ENCODE measurements at regions of chr3 and their contacts with region 1.

Region 1: GRCh38 chr3:37024092-37024491 is 30.8 kb downstream of the MLH1 start:
- DNase-seq: peak; percentile 8
- H3K4me3 Mint-ChIP-seq: no peak overlapping the region
- H3K27ac Mint-ChIP-seq: no peak overlapping the region
- H3K4me1 Mint-ChIP-seq: no peaks in the 10 kb centered on the region
- H3K27me3 Mint-ChIP-seq: no peaks in the 10 kb centered on the region
- CTCF ChIP-seq: peak; percentile 19

Region 2: DNA sequence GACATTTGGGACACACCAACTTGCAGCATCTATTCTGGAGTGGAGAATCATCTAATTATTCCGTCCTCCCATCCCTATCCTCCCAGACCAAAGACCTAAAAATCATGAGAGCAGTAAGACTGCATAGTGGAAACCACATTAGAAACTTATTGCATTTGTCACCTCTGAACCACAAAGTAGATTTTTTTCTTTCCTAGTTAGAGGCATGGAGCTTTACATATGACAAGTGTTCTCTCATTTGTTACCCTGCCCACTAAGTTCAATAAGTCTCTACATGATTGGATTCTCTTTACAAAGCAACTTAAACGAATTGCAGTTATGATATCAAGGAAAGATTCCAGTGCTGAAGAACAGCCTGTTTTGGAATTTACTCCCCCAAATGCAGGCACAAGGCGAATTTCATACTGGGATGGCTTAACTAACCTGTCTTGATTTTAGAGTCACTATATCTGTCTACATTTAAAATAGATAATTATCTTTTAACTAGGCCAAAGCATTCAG is 192.6 kb after region 1 on chr3:
- CTCF ChIA-PET with region 1: interaction called, 11 read pairs
- POLR2A ChIA-PET with region 1: no interaction called
- intact Hi-C with region 1: loop called (anchors 1 kb)
- DNase-seq: no peak
- H3K4me3 Mint-ChIP-seq: no peak overlapping the region
- H3K27ac Mint-ChIP-seq: no peak overlapping the region
- H3K4me1 Mint-ChIP-seq: peaks cover 10% of the 10 kb centered on the region
- H3K27me3 Mint-ChIP-seq: no peaks in the 10 kb centered on the region
- CTCF ChIP-seq: no peak

Region 3: DNA sequence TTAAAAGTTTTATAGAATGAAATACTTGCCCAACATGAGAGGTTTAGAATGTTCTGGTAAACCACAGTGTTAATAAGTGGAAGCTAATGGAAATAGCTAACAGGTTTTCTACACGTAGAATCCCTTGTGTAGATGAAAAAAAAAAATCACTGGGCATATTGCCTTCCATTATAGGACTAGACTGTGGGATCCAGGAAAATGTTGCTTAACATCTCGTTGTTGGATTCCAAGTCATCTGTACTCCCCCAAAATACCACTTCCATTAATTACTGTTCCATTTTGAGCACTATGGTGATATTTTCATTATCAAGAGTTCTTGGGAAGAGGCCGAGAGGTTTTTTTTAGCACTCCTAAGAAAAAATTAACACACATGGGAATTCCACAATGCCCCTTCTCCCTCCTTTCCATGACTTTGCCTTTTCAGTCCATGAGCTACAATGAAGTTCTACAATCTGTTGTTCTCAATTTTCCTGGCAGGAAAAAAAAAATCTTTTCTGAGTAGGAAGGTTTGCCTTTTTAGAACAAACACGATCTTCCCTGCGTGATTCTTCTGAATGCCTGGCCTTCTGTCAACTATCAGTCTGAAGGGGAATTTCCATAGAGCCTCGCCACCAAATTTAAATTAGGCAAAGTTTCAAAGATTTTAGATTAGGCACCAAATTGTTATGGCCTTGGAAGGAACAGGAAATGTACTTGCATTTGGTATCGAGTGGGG is 763.2 kb after region 1 on chr3:
- CTCF ChIA-PET with region 1: no interaction called
- POLR2A ChIA-PET with region 1: no interaction called
- intact Hi-C with region 1: no loop called
- DNase-seq: no peak
- H3K4me3 Mint-ChIP-seq: no peak overlapping the region
- H3K27ac Mint-ChIP-seq: no peak overlapping the region
- H3K4me1 Mint-ChIP-seq: no peaks in the 10 kb centered on the region
- H3K27me3 Mint-ChIP-seq: peaks cover 32% of the 10 kb centered on the region
- CTCF ChIP-seq: no peak